A673 (cell line): ENCODE measurements at regions of chr3 and their contacts with region 1.

Region 1: DNA sequence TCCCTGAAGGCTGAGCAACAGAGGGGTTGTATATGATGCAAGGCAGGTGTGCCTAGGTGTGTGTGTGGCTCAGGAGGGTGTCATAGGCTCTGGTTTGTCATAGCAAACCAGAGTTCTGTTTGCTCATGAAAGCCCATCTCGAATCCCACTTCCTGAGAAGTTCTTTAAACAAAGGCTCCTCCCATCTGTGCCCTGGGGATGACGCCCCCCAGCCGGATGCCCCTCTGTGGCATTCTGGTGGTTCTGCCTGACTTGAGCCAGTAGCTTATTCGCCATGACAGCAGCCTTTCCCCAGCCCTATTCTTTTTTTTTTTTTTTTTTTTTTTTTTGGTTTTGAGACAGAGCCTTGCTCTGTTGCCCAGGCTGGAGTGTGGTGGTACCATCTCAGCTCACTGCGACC is 45.4 kb downstream of the PDIA5 start:
- DNase-seq: no peak
- H3K4me3 ChIP-seq: no peak overlapping the region
- H3K27ac ChIP-seq: no peak overlapping the region
- H3K4me1 ChIP-seq: peaks cover 16% of the 10 kb centered on the region
- H3K27me3 ChIP-seq: no peaks in the 10 kb centered on the region
- CTCF ChIP-seq: no peak

Region 2: GRCh38 chr3:122989856-122990575 is 122.2 kb before region 1 on chr3:
- CTCF ChIA-PET with region 1: no interaction called
- POLR2A ChIA-PET with region 1: interaction called, 14 read pairs
- intact Hi-C with region 1: no loop called
- DNase-seq: no peak
- H3K4me3 ChIP-seq: no peak overlapping the region
- H3K27ac ChIP-seq: no peak overlapping the region
- H3K4me1 ChIP-seq: no peaks in the 10 kb centered on the region
- H3K27me3 ChIP-seq: peaks cover 100% of the 10 kb centered on the region
- CTCF ChIP-seq: no peak

Region 3: GRCh38 chr3:123396163-123397049 is 284.2 kb after region 1 on chr3:
- CTCF ChIA-PET with region 1: no interaction called
- POLR2A ChIA-PET with region 1: no interaction called
- intact Hi-C with region 1: no loop called
- DNase-seq: no peak
- H3K4me3 ChIP-seq: no peak overlapping the region
- H3K27ac ChIP-seq: no peak overlapping the region
- H3K4me1 ChIP-seq: no peaks in the 10 kb centered on the region
- H3K27me3 ChIP-seq: peaks cover 28% of the 10 kb centered on the region
- CTCF ChIP-seq: no peak